RWPE1 (cell line): ENCODE measurements at regions of chr1 and their contacts with region 1.

Region 1: DNA sequence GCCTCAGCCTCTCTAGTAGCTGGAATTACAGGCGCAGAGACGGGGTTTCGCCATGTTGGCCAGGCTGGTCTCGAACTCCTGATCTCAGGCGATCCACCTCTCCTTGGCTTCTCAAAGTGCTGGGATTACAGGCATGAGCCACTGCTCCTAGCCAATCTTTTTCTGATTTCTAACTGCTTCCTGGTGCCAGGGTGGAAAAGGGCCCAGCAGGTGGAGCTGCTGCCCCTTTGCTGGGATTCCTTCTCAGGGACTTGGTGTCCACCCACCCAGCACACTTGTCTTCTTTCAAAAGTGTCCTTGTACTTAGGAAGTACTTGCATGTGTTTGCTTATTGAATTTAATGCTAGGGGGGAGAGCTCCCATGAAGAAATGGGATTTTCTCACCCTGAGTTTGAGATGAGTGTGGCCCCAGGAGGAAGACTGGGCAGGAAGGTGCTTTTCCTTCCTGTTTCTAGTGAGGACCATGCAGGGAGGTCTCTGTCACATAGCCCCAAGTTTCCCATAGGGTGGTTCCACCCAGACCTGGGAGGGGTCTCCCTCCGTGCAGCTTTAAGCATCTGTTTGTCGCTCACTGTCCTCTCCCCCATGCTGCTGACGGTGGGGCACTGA is 14.2 kb downstream of the UTP11 start:
- DNase-seq: peak; percentile 77
- H3K27ac ChIP-seq: peak overlapping the region; percentile 92
- CTCF ChIP-seq: peak; percentile 91

Region 2: GRCh38 chr1:38152351-38153065 is 125.8 kb after region 1 on chr1:
- CTCF ChIA-PET with region 1: interaction called, 10 read pairs
- POLR2A ChIA-PET with region 1: no interaction called
- DNase-seq: peak; percentile 23
- H3K27ac ChIP-seq: no peak overlapping the region
- CTCF ChIP-seq: no peak

Region 3: DNA sequence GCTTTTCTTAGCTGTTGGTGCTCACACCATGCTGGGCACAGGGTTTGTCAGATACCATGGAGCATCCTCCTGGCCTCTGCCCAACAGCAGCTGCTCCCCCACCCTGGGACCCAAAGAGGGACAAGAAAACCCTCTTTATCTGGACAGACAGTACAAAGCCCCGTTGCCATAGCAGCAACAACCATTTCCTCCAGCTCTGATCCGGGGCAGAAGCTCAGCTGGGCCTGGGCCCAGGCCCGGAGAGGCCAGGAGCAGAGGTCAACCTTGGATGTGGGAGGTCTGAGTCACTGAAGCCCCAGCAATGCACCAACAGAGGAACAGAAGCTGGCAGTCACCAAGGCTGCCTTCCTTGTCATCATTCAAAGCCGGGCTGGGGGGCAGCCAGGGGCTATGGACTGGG is 248.3 kb after region 1 on chr1:
- CTCF ChIA-PET with region 1: no interaction called
- POLR2A ChIA-PET with region 1: no interaction called
- DNase-seq: no peak
- H3K27ac ChIP-seq: no peak overlapping the region
- CTCF ChIP-seq: no peak

Region 4: DNA sequence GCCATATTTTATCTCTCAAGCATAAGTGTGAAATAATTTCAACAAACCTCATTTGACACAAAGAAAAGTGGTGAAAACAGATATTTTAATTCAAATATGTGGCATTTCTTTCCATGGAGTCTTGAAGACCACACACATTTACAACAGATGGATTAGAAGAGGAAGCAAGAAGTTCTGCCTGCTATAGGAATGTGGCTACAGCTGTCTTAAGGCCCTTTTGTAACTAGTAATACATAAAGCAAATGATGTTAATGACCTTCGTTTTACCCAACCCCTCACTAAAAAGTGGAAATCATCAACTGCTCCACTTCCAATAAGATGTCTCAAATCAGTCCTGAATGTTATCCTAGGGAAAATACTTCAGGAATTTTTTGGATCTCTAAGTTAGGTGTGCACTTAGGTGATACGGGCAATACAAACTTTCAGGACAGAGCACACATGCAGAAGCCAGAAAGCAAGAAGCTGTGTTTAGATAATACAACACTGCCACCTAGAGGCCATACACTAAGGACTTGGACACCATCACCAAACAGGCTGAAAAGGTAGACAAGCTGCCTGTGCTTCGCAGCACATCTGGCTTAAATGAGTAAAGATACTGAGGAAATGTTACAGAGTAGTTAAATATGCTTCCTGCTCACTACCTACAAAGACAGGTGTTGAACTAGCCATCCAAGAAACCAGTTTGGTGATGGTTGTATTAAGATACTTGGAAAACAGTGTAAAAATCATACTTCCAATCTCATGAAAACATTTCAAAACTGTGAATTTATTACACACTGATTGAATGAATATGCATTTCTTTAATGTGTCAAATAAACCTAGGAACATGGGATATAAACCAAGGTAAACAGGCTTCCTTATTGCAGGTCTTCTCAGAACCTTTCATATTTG is 808.5 kb after region 1 on chr1:
- CTCF ChIA-PET with region 1: interaction called, 28 read pairs
- POLR2A ChIA-PET with region 1: no interaction called
- DNase-seq: peak; percentile 62
- H3K27ac ChIP-seq: no peak overlapping the region
- CTCF ChIP-seq: peak; percentile 72